MCF 10A (cell line): ENCODE measurements at regions of chr9 and their contacts with region 1.

Region 1: DNA sequence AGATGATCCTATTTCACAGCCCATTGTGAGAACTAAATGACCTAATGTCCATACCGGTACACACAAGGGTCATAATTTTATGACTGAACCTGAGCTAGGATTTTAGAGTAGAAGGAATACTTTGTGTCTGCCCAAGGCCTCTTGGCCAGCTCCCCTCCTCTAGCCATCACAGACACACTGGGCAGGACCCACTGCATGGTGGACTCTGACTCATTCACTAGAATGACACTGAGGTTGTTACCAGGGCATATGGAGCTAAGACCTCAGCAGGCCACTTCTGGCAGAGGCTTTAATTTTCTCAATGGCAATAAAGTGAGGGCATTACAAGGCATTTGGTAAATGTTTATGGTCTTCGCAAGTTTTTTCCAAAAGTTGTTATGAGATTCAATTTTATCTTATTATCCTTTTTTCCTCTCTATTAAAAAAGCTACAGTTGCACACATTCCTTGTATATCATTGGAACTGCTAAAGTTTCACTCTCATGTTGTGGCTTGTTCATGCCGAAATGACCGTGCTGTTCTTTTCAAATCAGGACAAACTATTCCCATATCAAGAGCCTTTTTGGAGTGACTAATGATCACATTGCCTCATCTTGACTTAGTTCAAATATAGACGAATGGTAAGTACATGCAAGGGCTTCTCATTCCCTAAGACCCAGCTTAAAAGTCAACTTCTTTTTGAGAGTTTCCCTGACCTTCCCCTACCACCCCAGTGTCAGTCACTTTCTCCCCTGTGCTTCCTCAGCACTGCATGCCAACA is 595.7 kb downstream of the ACTL7B start:
- DNase-seq: peak; percentile 67
- H3K4me3 Mint-ChIP-seq: peak overlapping the region; percentile 17
- H3K27ac Mint-ChIP-seq: peak overlapping the region; percentile 93
- H3K4me1 Mint-ChIP-seq: peaks cover 20% of the 10 kb centered on the region
- H3K27me3 Mint-ChIP-seq: no peaks in the 10 kb centered on the region
- CTCF ChIP-seq: no peak

Region 2: DNA sequence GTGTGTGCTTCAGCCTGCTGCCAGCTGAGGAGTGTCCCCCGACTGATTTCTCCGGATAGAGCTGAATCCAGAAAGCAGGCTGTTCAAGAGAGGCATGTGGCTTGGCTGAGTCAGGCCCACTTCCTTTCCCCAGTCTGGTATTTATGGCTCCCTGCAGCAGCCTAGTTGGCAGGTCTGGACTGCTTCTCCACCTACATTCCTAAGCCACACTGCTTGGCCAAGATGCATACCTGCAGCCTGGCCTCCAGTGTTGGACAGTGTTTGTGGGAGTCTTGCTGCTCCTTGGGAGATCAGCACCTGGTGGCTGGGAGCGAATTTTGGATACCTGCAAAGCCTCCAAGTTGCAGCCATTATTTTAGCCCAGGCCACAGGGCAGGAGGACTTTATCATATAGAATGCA is 75.2 kb before region 1 on chr9:
- CTCF ChIA-PET with region 1: no interaction called
- POLR2A ChIA-PET with region 1: interaction called, 12 read pairs
- intact Hi-C with region 1: no loop called
- DNase-seq: peak; percentile 73
- H3K4me3 Mint-ChIP-seq: no peak overlapping the region
- H3K27ac Mint-ChIP-seq: peak overlapping the region; percentile 41
- H3K4me1 Mint-ChIP-seq: peaks cover 27% of the 10 kb centered on the region
- H3K27me3 Mint-ChIP-seq: no peaks in the 10 kb centered on the region
- CTCF ChIP-seq: no peak

Region 3: DNA sequence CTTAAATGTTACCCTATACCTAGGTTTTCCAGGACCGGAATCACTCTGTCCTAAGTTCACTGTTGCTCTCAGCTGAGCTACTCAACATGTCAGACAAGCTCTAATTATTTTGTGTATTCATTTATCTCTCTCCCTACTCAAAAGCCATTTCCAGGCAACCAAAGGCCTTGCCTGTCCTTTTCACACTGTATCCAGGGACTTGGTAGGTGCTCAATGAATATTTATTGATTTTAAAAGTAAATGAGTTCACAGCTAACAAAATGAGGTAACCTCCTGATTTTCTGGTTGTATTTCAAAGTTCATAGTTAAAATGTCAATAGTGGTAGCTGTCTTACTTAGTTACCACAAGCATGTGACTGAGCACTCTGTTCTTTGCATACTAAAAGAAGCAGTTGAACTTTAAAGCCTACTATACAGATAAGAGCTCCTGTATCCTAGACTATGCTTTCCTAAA is 73.5 kb after region 1 on chr9:
- CTCF ChIA-PET with region 1: no interaction called
- POLR2A ChIA-PET with region 1: no interaction called
- intact Hi-C with region 1: no loop called
- DNase-seq: no peak
- H3K4me3 Mint-ChIP-seq: no peak overlapping the region
- H3K27ac Mint-ChIP-seq: no peak overlapping the region
- H3K4me1 Mint-ChIP-seq: no peaks in the 10 kb centered on the region
- H3K27me3 Mint-ChIP-seq: no peaks in the 10 kb centered on the region
- CTCF ChIP-seq: no peak

Region 4: GRCh38 chr9:108743901-108744371 is 483.8 kb after region 1 on chr9:
- CTCF ChIA-PET with region 1: no interaction called
- POLR2A ChIA-PET with region 1: no interaction called
- intact Hi-C with region 1: no loop called
- DNase-seq: peak; percentile 27
- H3K4me3 Mint-ChIP-seq: no peak overlapping the region
- H3K27ac Mint-ChIP-seq: no peak overlapping the region
- H3K4me1 Mint-ChIP-seq: peaks cover 17% of the 10 kb centered on the region
- H3K27me3 Mint-ChIP-seq: no peaks in the 10 kb centered on the region
- CTCF ChIP-seq: no peak